ENCODE measurements at regions of chr11 and their contacts with region 1.

Region 1: DNA sequence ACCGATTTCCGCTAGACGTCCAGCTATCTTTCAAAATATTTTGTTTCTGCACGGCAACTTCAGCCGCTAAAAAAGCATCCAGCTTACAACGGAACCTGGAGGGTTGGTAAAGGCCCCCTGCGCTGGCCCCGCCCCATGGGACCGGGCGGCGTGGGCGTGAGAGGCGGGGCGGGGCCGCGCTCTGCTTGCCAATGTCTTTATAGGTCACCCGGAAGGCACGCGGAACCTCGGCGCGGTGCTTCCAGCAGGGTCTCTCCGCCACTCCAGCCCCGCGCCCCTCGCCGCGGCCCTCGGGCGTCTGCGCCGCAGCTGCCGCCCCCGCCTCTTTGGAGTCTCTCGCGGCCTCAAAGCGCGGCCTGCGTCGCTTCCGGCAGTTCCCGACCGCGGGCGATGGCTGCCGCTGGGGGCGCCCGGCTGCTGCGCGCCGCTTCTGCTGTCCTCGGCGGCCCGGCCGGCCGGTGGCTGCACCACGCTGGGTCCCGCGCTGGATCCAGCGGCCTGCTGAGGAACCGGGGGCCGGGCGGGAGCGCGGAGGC is at the start of gene FDX1:
- DNase-seq: peak; percentile 77 to 88
- ATAC-seq: peak; percentile 84
- total RNA-seq, gene FDX1: 22.6 to 24.0 TPM

Region 2: GRCh38 chr11:110199184-110199941 is 230.4 kb before region 1 on chr11:
- intact Hi-C with region 1: loop called in 1 of 2 experiments (anchors 2 kb)
- DNase-seq: no peak
- ATAC-seq: no peak

Measured in left colon (tissue), 2 donors.